AG04450 (cell line): ENCODE measurements at regions of chr9 and their contacts with region 1.

Region 1: GRCh38 chr9:92911511-92912475 is 34.0 kb upstream of the ZNF484 start:
- DNase-seq: no peak
- H3K4me3 ChIP-seq: no peak overlapping the region
- H3K27ac ChIP-seq: no peak overlapping the region
- H3K27me3 ChIP-seq: peaks cover 14% of the 10 kb centered on the region
- CTCF ChIP-seq: no peak

Region 2: DNA sequence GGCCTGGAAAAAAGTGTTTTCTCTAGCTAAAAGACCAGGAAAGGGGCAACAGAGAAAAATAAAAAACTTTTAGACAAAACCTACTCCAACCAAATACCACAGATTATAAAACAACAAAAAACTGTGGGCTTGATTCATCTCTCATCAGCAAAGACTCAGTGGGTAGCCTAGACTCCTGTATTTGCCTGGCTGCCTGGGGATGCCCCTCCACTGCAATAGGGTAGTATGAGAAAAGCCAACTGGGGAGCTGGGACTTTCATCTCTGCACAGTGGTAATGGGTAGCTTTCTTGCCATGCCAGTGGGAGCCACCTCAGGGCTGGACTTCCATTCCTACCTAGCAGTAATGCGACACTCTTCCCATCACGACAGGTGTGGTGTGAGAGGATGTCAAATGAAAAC is 41.5 kb before region 1 on chr9:
- CTCF ChIA-PET with region 1: interaction called, 11 read pairs
- POLR2A ChIA-PET with region 1: no interaction called
- DNase-seq: no peak
- H3K4me3 ChIP-seq: no peak overlapping the region
- H3K27ac ChIP-seq: no peak overlapping the region
- H3K27me3 ChIP-seq: no peaks in the 10 kb centered on the region
- CTCF ChIP-seq: no peak

Region 3: DNA sequence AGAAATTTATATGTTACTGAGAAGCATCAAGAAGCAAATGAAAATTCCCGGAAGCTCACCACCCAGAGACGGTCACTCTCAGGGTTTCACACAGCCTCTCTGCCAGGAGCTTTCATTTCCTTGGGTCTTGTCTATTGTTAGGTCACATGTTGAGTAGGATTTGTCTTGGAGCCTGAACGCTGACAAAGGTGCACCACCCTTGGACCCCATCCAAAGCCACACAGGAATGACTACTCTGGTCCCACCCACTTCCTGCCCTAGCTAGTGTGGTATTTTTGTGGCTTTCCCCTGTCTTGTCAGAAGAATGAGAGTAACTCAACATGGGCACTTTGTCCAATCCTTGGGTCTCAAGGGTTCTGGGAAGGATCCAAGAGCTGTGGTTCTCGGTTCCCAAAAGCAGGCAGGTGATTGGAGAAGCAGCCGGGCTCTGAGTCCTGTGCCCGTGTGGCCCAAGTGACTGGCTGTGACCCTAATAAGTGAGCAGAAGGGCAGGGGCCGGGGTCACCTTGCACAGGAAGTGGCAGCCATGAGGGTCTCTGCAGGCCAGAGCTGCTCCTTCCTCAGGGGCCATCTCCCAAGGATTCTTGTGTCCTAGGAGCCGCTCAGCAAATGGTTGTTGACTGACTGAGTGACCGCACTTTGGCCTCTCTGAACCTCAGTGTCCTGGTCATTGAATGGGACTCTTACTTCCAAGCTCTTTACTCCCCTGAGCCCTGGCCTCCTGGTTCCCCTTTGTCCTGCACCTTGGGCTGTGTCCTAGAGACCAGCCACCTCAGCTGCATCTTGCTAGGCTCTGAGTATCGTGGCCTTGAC is 42.5 kb after region 1 on chr9:
- CTCF ChIA-PET with region 1: no interaction called
- POLR2A ChIA-PET with region 1: no interaction called
- DNase-seq: no peak
- H3K4me3 ChIP-seq: no peak overlapping the region
- H3K27ac ChIP-seq: no peak overlapping the region
- H3K27me3 ChIP-seq: peaks cover 9% of the 10 kb centered on the region
- CTCF ChIP-seq: no peak

Region 4: GRCh38 chr9:93143830-93144530 is 232.2 kb after region 1 on chr9:
- CTCF ChIA-PET with region 1: no interaction called
- POLR2A ChIA-PET with region 1: no interaction called
- DNase-seq: no peak
- H3K4me3 ChIP-seq: no peak overlapping the region
- H3K27ac ChIP-seq: no peak overlapping the region
- H3K27me3 ChIP-seq: no peaks in the 10 kb centered on the region
- CTCF ChIP-seq: no peak